Caco-2 (cell line): ENCODE measurements at regions of chr17 and their contacts with region 1.

Region 1: GRCh38 chr17:42659079-42659931 is at the start of gene TUBG2:
- DNase-seq: peak; percentile 96
- H3K4me3 ChIP-seq: peak within 1 kb of the TSS; percentile 79
- H3K4me3 Mint-ChIP-seq: peak within 1 kb of the TSS; percentile 96
- H3K27ac Mint-ChIP-seq: peak within 1 kb of the TSS; percentile 82
- H3K4me1 ChIP-seq: peaks cover 10% of the 10 kb centered on the region
- H3K4me1 Mint-ChIP-seq: peaks cover 19% of the 10 kb centered on the region
- H3K27me3 ChIP-seq: no peaks in the 10 kb centered on the region
- H3K27me3 Mint-ChIP-seq: no peaks in the 10 kb centered on the region
- CTCF ChIP-seq: no peak
- total RNA-seq, gene TUBG2: 23.8 and 26.5 TPM in 2 replicates

Region 2: GRCh38 chr17:42618442-42619150 is 40.7 kb before region 1 on chr17:
- CTCF ChIA-PET with region 1: interaction called, 10 read pairs
- POLR2A ChIA-PET with region 1: no interaction called
- intact Hi-C with region 1: loop called (anchors 1 kb)
- DNase-seq: peak; percentile 79
- H3K4me3 ChIP-seq: no peak overlapping the region
- H3K4me3 Mint-ChIP-seq: no peak overlapping the region
- H3K27ac Mint-ChIP-seq: peak overlapping the region; percentile 30
- H3K4me1 ChIP-seq: 0 out of 2 replicates have a peak, but pooled peaks cover 8% of the 10 kb centered on the region
- H3K4me1 Mint-ChIP-seq: peaks cover 10% of the 10 kb centered on the region
- H3K27me3 ChIP-seq: no peaks in the 10 kb centered on the region
- H3K27me3 Mint-ChIP-seq: no peaks in the 10 kb centered on the region
- CTCF ChIP-seq: peak; percentile 38 to 90

Region 3: GRCh38 chr17:42647778-42648177 is 11.5 kb before region 1 on chr17:
- CTCF ChIA-PET with region 1: no interaction called
- POLR2A ChIA-PET with region 1: no interaction called
- intact Hi-C with region 1: no loop called
- DNase-seq: no peak
- H3K4me3 ChIP-seq: no peak overlapping the region
- H3K4me3 Mint-ChIP-seq: no peak overlapping the region
- H3K27ac Mint-ChIP-seq: no peak overlapping the region
- H3K4me1 ChIP-seq: no peaks in the 10 kb centered on the region
- H3K4me1 Mint-ChIP-seq: peaks cover 3% of the 10 kb centered on the region
- H3K27me3 ChIP-seq: no peaks in the 10 kb centered on the region
- H3K27me3 Mint-ChIP-seq: peaks cover under 1% of the 10 kb centered on the region
- CTCF ChIP-seq: no peak